Activated naive CD4-positive, alpha-beta T cell treated with anti-CD3 and anti-CD28 coated beads for 36 hours (primary cell): ENCODE measurements at regions of chr18 and their contacts with region 1.

Region 1: DNA sequence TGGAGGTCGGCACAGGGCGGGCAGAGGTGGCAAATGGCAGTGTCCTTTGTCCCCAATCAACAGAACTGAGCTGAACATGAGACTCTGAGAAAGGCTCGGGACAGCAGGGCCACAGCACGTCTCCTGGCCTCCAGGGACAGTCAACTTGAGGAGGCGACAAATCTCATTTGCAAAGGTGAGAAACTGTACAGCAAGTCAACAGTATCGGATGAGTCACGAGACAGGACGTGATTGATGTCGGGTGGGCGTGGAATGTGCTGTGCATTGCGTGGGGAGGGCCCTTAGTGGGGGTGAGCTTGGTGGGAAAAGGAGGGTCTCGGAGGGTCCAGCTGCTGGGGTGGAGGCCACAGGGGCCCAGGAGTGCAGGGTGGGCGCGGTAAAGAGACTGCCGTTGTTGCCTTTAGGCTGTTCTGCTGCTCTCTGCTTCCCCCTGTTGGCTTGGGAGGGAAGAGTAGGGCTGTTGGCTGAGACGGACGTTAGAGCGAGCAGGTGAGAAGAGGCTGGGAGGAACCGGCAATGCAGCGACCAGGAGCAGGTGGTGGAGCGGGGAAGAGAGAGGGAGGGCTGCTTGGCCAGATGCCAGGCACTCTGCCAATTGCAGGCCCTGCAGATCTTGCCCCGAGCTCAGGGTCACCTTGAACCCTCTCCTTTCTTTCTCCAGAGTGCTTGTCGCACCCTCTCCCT is 164.3 kb downstream of the BCL2 start:
- DNase-seq: peak; percentile 93
- H3K4me3 Mint-ChIP-seq: peak overlapping the region; percentile 79
- H3K27ac Mint-ChIP-seq: peak overlapping the region; percentile 99
- H3K4me1 Mint-ChIP-seq: peaks cover 97% of the 10 kb centered on the region
- H3K27me3 Mint-ChIP-seq: no peaks in the 10 kb centered on the region

Region 2: DNA sequence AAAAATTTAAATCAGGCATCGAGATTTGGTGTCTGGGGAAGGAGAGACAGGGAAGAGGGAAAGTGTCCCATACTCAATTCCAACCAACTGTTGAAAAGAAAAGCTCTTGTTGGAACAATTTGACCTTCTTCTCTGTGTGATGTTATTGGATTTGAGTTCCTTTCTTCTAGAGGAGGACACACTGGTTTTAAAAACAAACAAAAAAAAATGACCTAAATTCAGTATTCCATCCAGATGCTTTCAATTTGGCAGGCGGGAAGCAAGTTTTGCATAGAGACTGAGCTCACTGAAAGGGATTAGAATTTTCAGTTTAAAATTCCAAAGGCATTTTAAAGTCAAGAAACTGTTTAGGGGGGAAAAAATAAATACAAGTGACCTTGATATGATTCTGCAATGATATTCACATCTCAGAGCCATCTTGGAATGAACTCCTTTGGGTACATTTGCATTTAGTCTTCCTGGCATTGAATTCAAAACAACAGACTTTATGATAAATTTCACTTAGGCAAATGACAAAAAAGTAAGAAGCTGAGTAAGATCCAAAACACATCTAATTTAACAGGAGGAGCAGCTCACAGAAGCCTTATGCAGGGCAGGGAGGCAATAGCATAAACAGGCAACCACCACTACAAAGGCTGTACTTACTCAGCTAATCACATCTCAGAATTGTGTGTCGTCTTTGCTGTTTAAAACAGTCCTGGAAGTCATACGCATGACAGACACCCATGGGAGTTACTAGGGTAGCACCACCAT is 1695.2 kb before region 1 on chr18:
- CTCF ChIA-PET with region 1: no interaction called
- intact Hi-C with region 1: no loop called
- DNase-seq: no peak
- H3K4me3 Mint-ChIP-seq: no peak overlapping the region
- H3K27ac Mint-ChIP-seq: no peak overlapping the region
- H3K4me1 Mint-ChIP-seq: no peaks in the 10 kb centered on the region
- H3K27me3 Mint-ChIP-seq: peaks cover 3% of the 10 kb centered on the region

Region 3: GRCh38 chr18:63040788-63041410 is 114.4 kb before region 1 on chr18:
- CTCF ChIA-PET with region 1: no interaction called
- intact Hi-C with region 1: loop called (anchors 1 kb)
- DNase-seq: peak; percentile 53
- H3K4me3 Mint-ChIP-seq: peak overlapping the region; percentile 1
- H3K27ac Mint-ChIP-seq: peak overlapping the region; percentile 51
- H3K4me1 Mint-ChIP-seq: peaks cover 25% of the 10 kb centered on the region
- H3K27me3 Mint-ChIP-seq: no peaks in the 10 kb centered on the region

Region 4: GRCh38 chr18:63119647-63120046 is 35.7 kb before region 1 on chr18:
- CTCF ChIA-PET with region 1: interaction called, 4 read pairs
- intact Hi-C with region 1: loop called (anchors 1 kb)
- DNase-seq: peak; percentile 64
- H3K4me3 Mint-ChIP-seq: no peak overlapping the region
- H3K27ac Mint-ChIP-seq: no peak overlapping the region
- H3K4me1 Mint-ChIP-seq: peaks cover 2% of the 10 kb centered on the region
- H3K27me3 Mint-ChIP-seq: peaks cover 2% of the 10 kb centered on the region

Region 5: GRCh38 chr18:63131106-63131958 is 24.0 kb before region 1 on chr18:
- CTCF ChIA-PET with region 1: interaction called, 26 read pairs
- intact Hi-C with region 1: loop called (anchors 1 kb)
- DNase-seq: peak; percentile 79
- H3K4me3 Mint-ChIP-seq: no peak overlapping the region
- H3K27ac Mint-ChIP-seq: peak overlapping the region; percentile 75
- H3K4me1 Mint-ChIP-seq: peaks cover 37% of the 10 kb centered on the region
- H3K27me3 Mint-ChIP-seq: no peaks in the 10 kb centered on the region

Region 6: DNA sequence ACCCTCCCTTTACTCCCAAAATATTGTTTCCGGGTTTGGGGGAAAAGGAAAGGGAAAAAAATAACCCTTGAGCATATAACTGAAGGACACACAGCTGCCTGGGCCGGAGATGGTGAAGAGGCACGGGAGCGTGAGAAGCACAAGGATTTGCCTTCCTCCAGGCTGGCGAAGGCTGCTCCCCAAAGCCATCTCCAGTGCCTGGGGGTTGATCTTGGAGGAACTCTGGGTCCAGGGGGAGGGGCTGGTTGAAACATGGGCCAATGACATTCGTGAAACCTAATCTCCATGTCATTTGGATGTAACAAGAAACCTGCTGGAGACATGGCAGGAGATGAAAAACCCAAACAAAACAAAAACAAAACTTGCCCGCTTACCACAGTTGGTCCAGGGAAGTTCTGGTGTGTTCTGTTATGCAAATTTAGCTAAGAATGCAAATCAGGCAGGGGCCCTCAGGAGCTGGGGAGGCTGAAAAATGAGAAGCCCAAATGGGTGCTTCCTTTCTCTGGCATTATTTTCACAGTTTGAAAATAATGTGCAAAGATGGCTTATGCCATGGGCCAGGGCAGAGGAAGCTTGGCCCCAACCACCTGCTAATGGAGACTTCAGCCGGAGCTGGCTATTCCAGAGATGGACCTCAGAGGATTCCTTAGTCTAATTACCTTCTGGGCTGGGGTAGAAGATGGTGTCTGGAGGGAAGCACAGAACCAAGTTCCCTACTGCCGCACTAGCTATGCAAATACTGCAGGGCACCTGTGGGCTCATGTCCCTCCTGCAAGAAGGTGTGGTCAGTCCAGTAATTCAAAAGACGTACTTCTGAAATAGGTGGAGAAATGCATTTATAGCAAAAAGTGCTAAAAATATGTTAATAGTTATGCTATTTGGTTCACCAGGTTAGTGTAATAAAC is 16.6 kb before region 1 on chr18:
- CTCF ChIA-PET with region 1: interaction called, 10 read pairs
- intact Hi-C with region 1: loop called (anchors 1 kb)
- DNase-seq: peak; percentile 65
- H3K4me3 Mint-ChIP-seq: peak overlapping the region; percentile 75
- H3K27ac Mint-ChIP-seq: peak overlapping the region; percentile 82
- H3K4me1 Mint-ChIP-seq: peaks cover 65% of the 10 kb centered on the region
- H3K27me3 Mint-ChIP-seq: no peaks in the 10 kb centered on the region

Region 7: GRCh38 chr18:63199743-63200241 is 44.5 kb after region 1 on chr18:
- CTCF ChIA-PET with region 1: interaction called, 10 read pairs
- intact Hi-C with region 1: loop called (anchors 2 kb)
- DNase-seq: peak; percentile 54
- H3K4me3 Mint-ChIP-seq: no peak overlapping the region
- H3K27ac Mint-ChIP-seq: no peak overlapping the region
- H3K4me1 Mint-ChIP-seq: peaks cover 30% of the 10 kb centered on the region
- H3K27me3 Mint-ChIP-seq: no peaks in the 10 kb centered on the region

Region 8: DNA sequence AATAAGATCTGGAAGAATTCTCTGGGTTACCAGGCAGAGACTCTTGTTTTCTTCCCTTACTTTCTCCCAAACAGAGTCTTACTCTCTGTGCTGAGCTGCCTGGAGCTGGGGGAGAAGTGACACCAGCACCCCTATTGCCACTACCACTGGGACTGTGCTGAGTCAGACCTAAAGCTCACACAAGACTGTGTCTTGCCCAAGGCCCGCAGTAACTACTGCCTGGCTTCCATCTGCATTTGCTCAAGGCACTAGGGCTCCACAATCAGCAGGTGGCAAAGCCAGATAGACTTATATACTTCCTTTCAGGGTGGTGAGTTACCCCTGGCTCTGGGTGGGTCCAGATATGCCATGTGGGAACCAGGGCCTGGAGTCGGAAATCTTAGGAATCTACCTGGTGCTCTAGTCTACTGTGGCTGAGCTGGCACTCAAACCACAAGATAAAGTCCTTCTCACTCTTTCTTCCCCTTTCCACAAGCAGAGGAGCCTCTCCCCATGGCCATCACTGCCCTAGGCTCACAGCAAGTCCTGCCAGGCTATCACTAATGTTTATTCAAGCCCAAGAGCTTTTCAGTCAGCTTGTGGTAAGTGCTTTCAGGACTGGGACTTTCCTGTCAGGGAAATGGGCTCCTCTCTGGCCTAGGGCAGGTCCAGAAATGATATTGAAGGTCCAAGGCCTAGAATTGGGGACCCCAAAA is 704.6 kb after region 1 on chr18:
- CTCF ChIA-PET with region 1: no interaction called
- intact Hi-C with region 1: no loop called
- DNase-seq: no peak
- H3K4me3 Mint-ChIP-seq: no peak overlapping the region
- H3K27ac Mint-ChIP-seq: no peak overlapping the region
- H3K4me1 Mint-ChIP-seq: no peaks in the 10 kb centered on the region
- H3K27me3 Mint-ChIP-seq: peaks cover 6% of the 10 kb centered on the region